ENCODE measurements at regions of chr2 and their contacts with region 1.

Region 1: GRCh38 chr2:206154197-206154596 is 5.0 kb downstream of the NDUFS1 start:
- DNase-seq: no peak
- H3K4me3 ChIP-seq: no peak overlapping the region
- H3K27ac ChIP-seq: no peak overlapping the region
- H3K4me1 ChIP-seq: no peaks in the 10 kb centered on the region
- H3K27me3 ChIP-seq: no peaks in the 10 kb centered on the region
- CTCF ChIP-seq: peak in 2 of 3 experiments; percentile 30 to 38; a peak in 3 of 4 replicates
- EP300 ChIP-seq: no peak
- POLR2A ChIP-seq: no peak
- RAD21 ChIP-seq: peak; percentile 37 to 60; a peak in 3 of 4 replicates

Region 2: DNA sequence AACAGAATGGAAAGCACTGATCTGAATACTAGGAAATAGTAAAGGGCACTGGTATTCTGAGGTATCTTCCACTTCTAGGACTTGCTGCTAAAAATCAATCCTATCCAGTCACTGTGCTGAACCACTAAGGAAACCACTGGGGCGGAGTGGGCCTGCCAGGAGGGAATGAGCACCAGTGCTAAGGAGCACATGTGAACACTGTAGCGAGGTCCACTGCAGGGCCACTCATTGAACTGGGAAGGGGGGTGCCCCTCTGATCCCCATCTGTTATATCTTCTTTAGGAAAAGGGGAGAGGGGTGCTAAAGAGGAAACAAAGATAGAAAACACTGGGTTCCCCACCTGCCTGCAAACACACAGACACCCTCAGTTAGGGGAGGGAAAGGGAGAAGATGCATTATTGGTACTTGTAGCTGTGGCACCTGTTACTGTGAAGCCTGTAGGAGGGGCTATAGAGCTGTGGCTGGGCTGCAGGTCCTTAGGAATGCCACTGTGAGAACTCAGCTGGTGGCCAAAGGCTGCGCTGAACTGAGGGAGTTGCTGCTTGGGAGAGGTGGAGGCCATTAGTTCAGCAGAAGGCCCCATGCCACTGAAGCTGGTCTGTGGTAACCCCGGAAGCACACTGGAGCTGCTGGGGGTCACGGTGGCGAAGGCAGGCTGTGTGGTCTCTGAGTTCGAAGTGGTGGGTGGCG is 150.0 kb before region 1 on chr2:
- CTCF ChIA-PET with region 1: interaction called, 11 read pairs
- POLR2A ChIA-PET with region 1: no interaction called
- DNase-seq: peak; percentile 39 to 69
- H3K4me3 ChIP-seq: no peak overlapping the region
- H3K27ac ChIP-seq: no peak overlapping the region
- H3K4me1 ChIP-seq: no peaks in the 10 kb centered on the region
- H3K27me3 ChIP-seq: no peaks in the 10 kb centered on the region
- CTCF ChIP-seq: peak; percentile 62 to 91 (median 81)
- EP300 ChIP-seq: no peak
- POLR2A ChIP-seq: no peak
- RAD21 ChIP-seq: peak; percentile 90 to 92

Measured in H1 (cell line).